Upper lobe of right lung (tissue), 1 donor: ENCODE measurements at regions of chr4 and their contacts with region 1.

Region 1: GRCh38 chr4:98430708-98431403 is 169.7 kb downstream of the RAP1GDS1 start:
- DNase-seq: no peak
- ATAC-seq: peak; percentile 95
- H3K4me3 ChIP-seq: no peak overlapping the region
- H3K27ac ChIP-seq: no peak overlapping the region
- H3K4me1 ChIP-seq: no peaks in the 10 kb centered on the region
- H3K27me3 ChIP-seq: no peaks in the 10 kb centered on the region
- CTCF ChIP-seq: no peak

Region 2: GRCh38 chr4:98612318-98613250 is 181.7 kb after region 1 on chr4:
- intact Hi-C with region 1: no loop called
- DNase-seq: no peak
- ATAC-seq: no peak
- H3K4me3 ChIP-seq: no peak overlapping the region
- H3K27ac ChIP-seq: no peak overlapping the region
- H3K4me1 ChIP-seq: no peaks in the 10 kb centered on the region
- H3K27me3 ChIP-seq: no peaks in the 10 kb centered on the region
- CTCF ChIP-seq: no peak

Region 3: GRCh38 chr4:98639523-98639922 is 208.7 kb after region 1 on chr4:
- intact Hi-C with region 1: loop called (anchors 5 kb)
- DNase-seq: no peak
- ATAC-seq: no peak
- H3K4me3 ChIP-seq: no peak overlapping the region
- H3K27ac ChIP-seq: no peak overlapping the region
- H3K4me1 ChIP-seq: no peaks in the 10 kb centered on the region
- H3K27me3 ChIP-seq: no peaks in the 10 kb centered on the region
- CTCF ChIP-seq: no peak